ENCODE measurements at regions of chr10 and their contacts with region 1.

Region 1: GRCh38 chr10:71396084-71396720 is 518 bp upstream of the CDH23 start:
- DNase-seq: peak; percentile 46
- H3K4me3 Mint-ChIP-seq: peak overlapping the region; percentile 37
- H3K27ac Mint-ChIP-seq: no peak overlapping the region
- H3K4me1 Mint-ChIP-seq: peaks cover 6% of the 10 kb centered on the region
- H3K27me3 Mint-ChIP-seq: peaks cover 94% of the 10 kb centered on the region

Region 2: DNA sequence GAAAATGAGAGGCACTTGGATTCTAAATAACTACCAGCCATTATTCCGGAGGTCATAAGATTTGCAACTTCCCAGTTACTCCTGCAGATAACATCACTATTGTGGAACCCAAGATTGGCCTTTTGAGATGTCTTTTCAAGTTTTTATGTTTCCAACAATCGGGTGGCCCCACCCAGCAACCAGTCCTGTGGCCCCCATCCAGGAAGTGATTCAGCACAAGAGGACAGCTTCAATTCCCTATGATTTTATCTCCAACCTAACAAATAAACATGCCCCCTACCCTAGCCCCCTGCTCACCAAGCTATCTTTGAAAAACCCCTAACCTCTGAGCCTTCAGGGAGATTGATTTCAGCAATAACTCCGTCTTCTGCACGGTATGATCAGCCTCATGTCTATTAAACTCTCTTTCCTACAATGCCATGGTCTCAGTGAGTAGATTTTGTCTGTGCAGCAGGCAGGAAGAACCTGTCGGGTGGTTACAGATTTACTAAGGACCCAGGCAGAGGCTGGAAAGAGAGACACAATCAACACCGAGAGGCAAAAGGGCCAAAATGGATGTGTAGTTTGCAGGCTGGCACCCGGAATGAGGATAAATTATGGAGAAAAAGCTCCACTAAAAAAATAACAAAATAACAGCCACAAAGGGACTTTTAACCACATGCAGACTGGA is 267.8 kb before region 1 on chr10:
- CTCF ChIA-PET with region 1: no interaction called
- DNase-seq: no peak
- H3K4me3 Mint-ChIP-seq: no peak overlapping the region
- H3K27ac Mint-ChIP-seq: no peak overlapping the region
- H3K4me1 Mint-ChIP-seq: peaks cover 8% of the 10 kb centered on the region
- H3K27me3 Mint-ChIP-seq: peaks cover 36% of the 10 kb centered on the region

Region 3: GRCh38 chr10:71351628-71352319 is 44.4 kb before region 1 on chr10:
- CTCF ChIA-PET with region 1: no interaction called
- DNase-seq: no peak
- H3K4me3 Mint-ChIP-seq: no peak overlapping the region
- H3K27ac Mint-ChIP-seq: no peak overlapping the region
- H3K4me1 Mint-ChIP-seq: no peaks in the 10 kb centered on the region
- H3K27me3 Mint-ChIP-seq: no peaks in the 10 kb centered on the region

Region 4: DNA sequence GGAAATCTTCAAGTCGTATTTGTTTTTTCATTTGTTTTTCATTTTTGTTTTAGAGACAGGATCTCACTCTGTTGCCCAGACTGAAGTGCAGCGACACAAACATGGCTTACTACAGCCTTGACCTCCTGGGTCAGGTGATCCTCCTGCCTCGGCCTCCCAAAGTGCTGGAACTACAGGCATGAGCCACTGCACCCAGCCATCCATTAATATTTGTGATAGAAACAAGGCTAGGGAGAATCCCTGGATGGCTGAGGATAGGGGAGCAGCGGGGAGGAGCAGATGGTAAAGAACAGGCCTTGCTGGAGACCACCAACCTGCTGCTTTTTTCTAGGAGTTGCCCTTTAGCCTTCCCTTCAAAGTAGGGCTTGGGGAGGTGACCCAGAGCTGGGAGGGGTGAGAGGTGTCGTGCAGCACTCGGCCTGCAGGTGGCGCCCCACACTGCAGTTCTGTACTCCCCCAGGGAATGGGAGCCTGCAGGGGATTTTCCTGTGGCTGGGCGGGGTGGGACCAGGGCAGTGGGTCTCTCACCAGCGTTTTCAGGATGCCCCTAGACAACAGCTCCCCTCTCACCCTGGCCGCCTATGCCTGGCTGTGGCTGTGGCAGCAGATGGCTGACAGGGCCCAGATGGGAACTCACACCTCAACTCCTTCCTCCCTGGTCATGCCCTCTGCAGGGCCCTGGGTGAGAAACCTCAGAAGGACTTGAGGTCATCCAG is 12.1 kb before region 1 on chr10:
- CTCF ChIA-PET with region 1: interaction called, 16 read pairs
- DNase-seq: peak; percentile 81
- H3K4me3 Mint-ChIP-seq: no peak overlapping the region
- H3K27ac Mint-ChIP-seq: no peak overlapping the region
- H3K4me1 Mint-ChIP-seq: no peaks in the 10 kb centered on the region
- H3K27me3 Mint-ChIP-seq: peaks cover 21% of the 10 kb centered on the region

Measured in activated naive CD4-positive, alpha-beta T cell treated with anti-CD3 and anti-CD28 coated beads, Interleukin-2, amount 10 ng/mL, durations not matched to agents 7 days and 5 days (primary cell).